CD4-positive, alpha-beta T cell (primary cell): ENCODE measurements at regions of chr6 and their contacts with region 1.

Region 1: GRCh38 chr6:31901953-31902643 is at the start of gene ZBTB12:
- DNase-seq: peak; percentile 67 to 94 (median 84)
- ATAC-seq: peak; percentile 48
- H3K4me3 ChIP-seq: peak within 1 kb of the TSS; percentile 68
- H3K4me3 Mint-ChIP-seq: peak within 1 kb of the TSS; percentile 89
- H3K27ac ChIP-seq: peak within 1 kb of the TSS; percentile 13 to 72
- H3K27ac Mint-ChIP-seq: peak within 1 kb of the TSS; percentile 65
- H3K4me1 ChIP-seq: peaks cover 39% of the 10 kb centered on the region
- H3K4me1 Mint-ChIP-seq: peaks cover 35% of the 10 kb centered on the region
- H3K27me3 ChIP-seq: no peaks in the 10 kb centered on the region
- H3K27me3 Mint-ChIP-seq: no peaks in the 10 kb centered on the region
- CTCF ChIP-seq: no peak
- total RNA-seq, gene ZBTB12: 0.28 to 0.33 TPM

Region 2: GRCh38 chr6:31958741-31959739 is 56.9 kb after region 1 on chr6 and contains the starts of genes NELFE and SKIC2:
- CTCF ChIA-PET with region 1: no interaction called
- POLR2A ChIA-PET with region 1: interaction called, 13 read pairs
- intact Hi-C with region 1: loop called (anchors 2 to 5 kb)
- DNase-seq: peak; percentile 96 to 100 (median 98)
- ATAC-seq: peak; percentile 97
- H3K4me3 ChIP-seq: peak within 1 kb of the TSS; percentile 97
- H3K4me3 Mint-ChIP-seq: peak within 1 kb of the TSS; percentile 96
- H3K27ac ChIP-seq: peak within 1 kb of the TSS; percentile 94 to 96
- H3K27ac Mint-ChIP-seq: peak within 1 kb of the TSS; percentile 97
- H3K4me1 ChIP-seq: peaks cover 30% of the 10 kb centered on the region
- H3K4me1 Mint-ChIP-seq: peaks cover 38% of the 10 kb centered on the region
- H3K27me3 ChIP-seq: no peaks in the 10 kb centered on the region
- H3K27me3 Mint-ChIP-seq: no peaks in the 10 kb centered on the region
- CTCF ChIP-seq: no peak
- total RNA-seq, gene NELFE: 53.8 to 58.2 TPM
- total RNA-seq, gene SKIC2: 133 to 141 TPM

Region 3: DNA sequence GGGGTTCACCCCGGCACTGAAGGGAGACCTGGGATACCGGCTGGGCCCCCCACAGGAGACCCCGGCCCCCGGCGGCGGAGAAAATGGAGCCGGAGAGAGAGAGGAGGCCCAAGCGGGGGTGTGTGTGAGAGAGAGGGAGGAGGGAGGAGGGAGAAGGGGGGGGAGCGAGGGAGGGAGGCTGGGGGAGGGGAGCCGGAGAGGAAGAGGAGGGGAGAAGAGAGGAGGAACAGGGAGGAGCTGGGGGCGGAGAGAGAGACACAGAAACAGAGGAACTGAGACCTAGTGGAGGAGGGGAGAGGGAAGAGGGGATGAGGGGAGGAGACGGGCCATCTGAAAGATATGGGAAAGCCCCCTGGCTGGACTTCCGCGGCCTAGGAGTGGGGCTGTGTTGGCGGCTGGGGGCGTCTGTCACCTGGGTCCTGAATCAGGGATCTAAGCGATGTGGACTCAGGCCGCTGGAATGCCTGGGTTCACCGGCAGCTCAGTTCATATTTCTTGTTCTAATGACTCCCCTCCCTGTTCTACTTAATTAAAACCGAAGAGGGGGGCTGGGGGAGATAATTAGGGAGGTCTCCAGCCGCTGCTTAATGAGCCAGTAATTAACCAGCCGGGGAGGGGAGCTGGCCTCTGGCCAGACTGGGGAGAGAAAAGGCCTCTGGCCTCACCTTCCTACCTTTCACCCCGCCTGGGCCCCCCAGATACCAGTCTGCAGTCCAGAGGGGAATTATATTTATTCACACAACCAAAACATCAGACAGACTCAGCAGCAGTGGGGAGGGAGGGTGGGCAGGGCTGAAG is 288.2 kb after region 1 on chr6 and contains the start of gene PBX2:
- CTCF ChIA-PET with region 1: no interaction called
- POLR2A ChIA-PET with region 1: no interaction called
- intact Hi-C with region 1: loop called in 1 of 2 experiments (anchors 5 kb)
- DNase-seq: peak; percentile 65 to 96 (median 86)
- ATAC-seq: peak; percentile 51
- H3K4me3 ChIP-seq: peak within 1 kb of the TSS; percentile 96
- H3K4me3 Mint-ChIP-seq: peak within 1 kb of the TSS; percentile 99
- H3K27ac ChIP-seq: peak within 1 kb of the TSS; percentile 93
- H3K27ac Mint-ChIP-seq: peak within 1 kb of the TSS; percentile 96
- H3K4me1 ChIP-seq: peaks cover 74% of the 10 kb centered on the region
- H3K4me1 Mint-ChIP-seq: peaks cover 71% of the 10 kb centered on the region
- H3K27me3 ChIP-seq: no peaks in the 10 kb centered on the region
- H3K27me3 Mint-ChIP-seq: no peaks in the 10 kb centered on the region
- CTCF ChIP-seq: no peak
- total RNA-seq, gene PBX2: 62.0 to 65.6 TPM